ENCODE measurements at regions of chr1 and their contacts with region 1.

Region 1: GRCh38 chr1:67561704-67562113 is 123.3 kb upstream of the GADD45A start:
- DNase-seq: peak; percentile 78
- CTCF ChIP-seq: peak; percentile 80

Region 2: DNA sequence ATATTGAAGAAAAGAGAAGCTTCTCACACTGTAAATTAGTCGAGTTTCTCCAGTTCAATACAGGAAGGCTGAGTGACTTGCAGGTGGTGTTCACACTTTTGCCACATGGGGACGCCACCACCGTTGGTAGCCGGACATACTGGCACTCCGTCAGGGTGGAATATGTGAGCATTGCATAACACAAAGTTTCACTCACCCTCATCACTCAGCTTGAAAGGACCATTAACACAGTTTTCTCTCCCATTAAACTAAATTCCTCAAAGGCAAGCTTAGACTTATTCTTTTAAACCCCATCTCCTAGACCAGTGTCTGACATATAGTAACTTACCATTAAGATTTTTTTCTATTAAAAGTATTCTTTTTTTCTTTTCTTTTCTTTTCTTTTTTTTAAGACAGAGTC is 26.2 kb before region 1 on chr1:
- CTCF ChIA-PET with region 1: interaction called, 49 read pairs
- POLR2A ChIA-PET with region 1: no interaction called
- DNase-seq: peak; percentile 43
- CTCF ChIP-seq: peak; percentile 50

Region 3: DNA sequence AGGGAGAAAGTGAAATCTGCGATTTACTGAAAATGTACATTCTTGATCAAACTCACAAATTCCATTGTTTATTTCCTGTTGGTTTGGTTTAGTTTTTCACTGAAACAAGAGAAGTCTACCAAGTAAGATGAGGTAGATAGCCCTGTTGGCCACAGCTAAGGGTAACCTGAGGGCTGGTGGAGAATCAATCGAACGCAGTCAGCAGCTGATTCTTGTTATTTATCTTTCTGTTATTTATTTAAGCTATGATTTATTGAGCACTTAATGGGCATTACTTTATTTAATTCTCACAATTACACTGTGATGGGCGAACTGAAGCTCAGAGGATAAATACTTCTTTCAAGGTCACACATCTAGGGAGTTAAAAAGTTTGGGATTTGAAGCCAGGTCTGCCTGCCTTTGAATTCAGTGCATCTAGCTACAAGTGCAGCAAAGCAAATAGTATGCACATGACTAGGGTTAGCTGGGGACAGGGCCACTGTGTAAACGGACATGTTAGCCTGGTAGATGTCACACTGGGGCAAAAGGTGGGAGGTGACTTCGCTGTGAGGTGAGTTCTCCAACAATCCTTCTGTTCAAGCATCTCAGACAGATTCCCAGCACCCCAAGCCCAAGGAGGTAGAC is 16.8 kb after region 1 on chr1:
- CTCF ChIA-PET with region 1: interaction called, 63 read pairs
- POLR2A ChIA-PET with region 1: no interaction called
- DNase-seq: no peak
- CTCF ChIP-seq: no peak

Region 4: DNA sequence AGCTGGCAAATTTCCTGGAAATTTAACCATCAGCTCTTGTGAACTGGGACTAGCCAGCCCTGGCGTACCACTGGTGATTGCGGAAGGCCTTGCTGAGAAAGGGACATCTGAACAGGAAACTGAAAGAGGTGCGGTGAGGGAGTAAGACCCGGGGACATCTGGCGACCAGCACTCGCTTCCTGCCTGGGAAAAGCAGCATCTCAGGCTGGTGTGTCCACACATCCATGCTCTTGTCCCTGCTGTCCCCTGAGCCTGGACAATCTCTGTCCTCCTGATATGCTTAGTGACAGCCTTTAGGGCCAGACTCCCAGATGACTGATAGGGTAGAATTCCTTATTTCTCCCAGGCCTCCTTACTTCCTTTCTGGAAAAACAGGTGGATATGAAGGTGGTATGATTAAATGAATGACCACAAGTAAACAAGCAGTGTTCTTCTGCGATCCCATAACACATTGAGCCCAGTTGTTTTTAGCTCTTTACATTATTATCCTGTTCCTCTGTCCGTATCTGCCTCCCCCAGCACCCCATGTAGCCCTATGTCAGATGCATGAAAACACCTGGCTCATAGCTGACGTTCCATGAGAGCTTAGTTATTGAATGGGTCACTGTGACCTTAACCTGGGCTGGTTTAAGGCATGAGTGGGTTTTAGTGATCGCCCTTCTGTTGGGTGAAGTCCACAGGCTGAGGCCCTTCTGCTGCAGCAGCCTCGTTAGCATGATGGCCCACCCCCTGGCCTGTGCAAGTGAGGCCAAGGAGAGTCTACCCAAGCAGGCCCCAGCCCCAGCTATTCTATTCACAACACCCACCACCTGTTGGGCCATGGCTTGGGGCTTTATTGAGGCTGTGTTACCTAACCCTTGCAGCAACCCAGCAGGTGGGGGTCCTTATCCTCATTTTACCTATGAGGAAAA is 47.2 kb after region 1 on chr1:
- CTCF ChIA-PET with region 1: interaction called, 12 read pairs
- POLR2A ChIA-PET with region 1: no interaction called
- DNase-seq: no peak
- CTCF ChIP-seq: no peak

Region 5: DNA sequence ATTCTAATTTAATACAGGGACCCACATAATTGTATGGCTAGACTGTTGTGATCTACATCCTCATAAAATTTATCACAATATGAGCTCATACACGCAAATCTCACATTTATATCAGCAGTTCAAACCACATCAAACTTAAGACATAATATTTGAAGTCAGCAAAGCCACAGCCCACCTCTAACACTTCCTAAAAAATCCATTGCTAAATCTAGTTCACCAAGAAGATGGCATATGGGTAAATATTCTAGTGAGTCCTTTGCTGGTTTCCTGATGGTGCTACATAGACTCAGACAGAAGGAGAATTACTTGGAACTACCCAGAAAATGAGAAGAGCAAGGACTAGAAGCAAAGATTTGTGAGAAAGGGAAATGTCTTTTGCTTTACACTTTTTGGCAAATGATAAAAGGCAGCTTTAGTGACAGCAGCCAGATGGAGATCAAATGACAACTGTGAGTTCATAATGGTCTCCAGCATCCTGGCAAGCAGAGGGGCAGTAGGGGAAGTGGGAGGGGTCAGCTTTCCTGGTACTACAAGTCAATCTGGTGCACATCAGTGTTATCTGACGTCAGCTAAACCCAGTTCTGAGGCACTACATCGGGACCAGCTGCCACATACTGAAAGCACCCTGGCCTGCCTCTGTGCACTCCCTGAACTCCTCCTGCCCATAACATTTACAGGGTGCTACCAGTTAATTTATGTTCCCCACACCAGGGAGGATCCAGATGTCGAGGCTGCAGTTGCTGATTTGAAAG is 112.7 kb after region 1 on chr1:
- CTCF ChIA-PET with region 1: interaction called, 12 read pairs
- POLR2A ChIA-PET with region 1: no interaction called
- DNase-seq: no peak
- CTCF ChIP-seq: no peak

Region 6: GRCh38 chr1:67869233-67869632 is 307.5 kb after region 1 on chr1:
- CTCF ChIA-PET with region 1: no interaction called
- POLR2A ChIA-PET with region 1: no interaction called
- DNase-seq: no peak
- CTCF ChIP-seq: no peak